Endothelial cell of umbilical vein (primary cell): ENCODE measurements at regions of chr3 and their contacts with region 1.

Region 1: DNA sequence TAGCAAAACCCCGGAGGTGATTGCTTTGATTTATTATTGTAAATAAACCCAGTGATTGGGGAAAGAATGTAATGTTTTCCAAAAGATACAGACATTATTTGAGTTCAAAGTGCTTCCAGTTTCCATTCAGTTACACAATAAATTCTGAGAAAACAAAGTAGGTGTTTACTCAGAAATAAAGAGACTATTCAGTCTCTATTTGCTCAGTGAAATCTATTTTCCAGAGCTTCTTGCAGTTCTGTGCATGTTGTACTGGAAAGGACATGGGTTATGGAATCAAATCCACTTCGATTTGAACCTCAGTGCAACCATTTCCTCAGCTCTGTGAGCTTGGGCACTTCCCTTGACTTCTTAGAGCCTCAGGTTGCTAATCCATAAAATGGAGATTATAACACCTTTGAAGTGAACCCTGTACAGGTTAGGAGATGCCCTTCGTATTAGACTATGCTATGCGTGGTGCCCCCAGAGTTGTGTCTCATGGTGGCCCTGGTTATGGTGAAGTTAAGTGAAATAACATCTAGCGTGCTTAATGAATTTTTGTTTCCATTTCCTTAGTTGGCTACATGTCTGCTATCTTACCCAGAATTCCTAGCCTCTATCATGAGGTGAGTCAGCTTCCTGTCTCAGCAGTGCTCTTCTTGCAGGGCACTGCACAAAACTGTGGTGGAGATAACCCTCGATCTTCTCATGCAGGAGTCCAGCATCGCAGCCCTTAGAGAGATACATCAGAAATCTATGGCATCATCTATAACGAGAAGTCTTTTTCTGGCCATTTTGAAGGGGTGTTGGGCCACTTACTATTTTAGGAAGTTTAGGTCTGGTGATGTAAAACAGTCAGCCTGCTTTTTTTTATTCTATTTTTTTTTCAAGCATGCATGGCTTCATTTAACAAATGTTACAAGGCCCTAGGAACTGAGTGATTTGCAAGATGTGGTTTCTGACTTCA is 97.7 kb downstream of the RPL39L start:
- DNase-seq: peak; percentile 84
- H3K4me3 ChIP-seq: no peak overlapping the region
- H3K27ac ChIP-seq: peak overlapping the region; percentile 64
- H3K4me1 ChIP-seq: peaks cover 41% of the 10 kb centered on the region
- H3K27me3 ChIP-seq: no peaks in the 10 kb centered on the region
- CTCF ChIP-seq: no peak
- POLR2A ChIP-seq: no peak

Region 2: GRCh38 chr3:185950718-185951117 is 1090.9 kb before region 1 on chr3:
- CTCF ChIA-PET with region 1: no interaction called
- POLR2A ChIA-PET with region 1: no interaction called
- dilution Hi-C with region 1: no loop called
- intact Hi-C with region 1: no loop called
- DNase-seq: no peak
- H3K4me3 ChIP-seq: no peak overlapping the region
- H3K27ac ChIP-seq: no peak overlapping the region
- H3K4me1 ChIP-seq: no peaks in the 10 kb centered on the region
- H3K27me3 ChIP-seq: peaks cover 5 to 23% of the 10 kb centered on the region in 2 experiments
- CTCF ChIP-seq: no peak
- POLR2A ChIP-seq: no peak

Region 3: GRCh38 chr3:186625600-186626042 is 416.0 kb before region 1 on chr3:
- CTCF ChIA-PET with region 1: no interaction called
- POLR2A ChIA-PET with region 1: no interaction called
- dilution Hi-C with region 1: no loop called
- intact Hi-C with region 1: no loop called
- DNase-seq: no peak
- H3K4me3 ChIP-seq: no peak overlapping the region
- H3K27ac ChIP-seq: no peak overlapping the region
- H3K4me1 ChIP-seq: no peaks in the 10 kb centered on the region
- H3K27me3 ChIP-seq: peaks cover 0 to 4% of the 10 kb centered on the region in 2 experiments
- CTCF ChIP-seq: no peak
- POLR2A ChIP-seq: no peak

Region 4: DNA sequence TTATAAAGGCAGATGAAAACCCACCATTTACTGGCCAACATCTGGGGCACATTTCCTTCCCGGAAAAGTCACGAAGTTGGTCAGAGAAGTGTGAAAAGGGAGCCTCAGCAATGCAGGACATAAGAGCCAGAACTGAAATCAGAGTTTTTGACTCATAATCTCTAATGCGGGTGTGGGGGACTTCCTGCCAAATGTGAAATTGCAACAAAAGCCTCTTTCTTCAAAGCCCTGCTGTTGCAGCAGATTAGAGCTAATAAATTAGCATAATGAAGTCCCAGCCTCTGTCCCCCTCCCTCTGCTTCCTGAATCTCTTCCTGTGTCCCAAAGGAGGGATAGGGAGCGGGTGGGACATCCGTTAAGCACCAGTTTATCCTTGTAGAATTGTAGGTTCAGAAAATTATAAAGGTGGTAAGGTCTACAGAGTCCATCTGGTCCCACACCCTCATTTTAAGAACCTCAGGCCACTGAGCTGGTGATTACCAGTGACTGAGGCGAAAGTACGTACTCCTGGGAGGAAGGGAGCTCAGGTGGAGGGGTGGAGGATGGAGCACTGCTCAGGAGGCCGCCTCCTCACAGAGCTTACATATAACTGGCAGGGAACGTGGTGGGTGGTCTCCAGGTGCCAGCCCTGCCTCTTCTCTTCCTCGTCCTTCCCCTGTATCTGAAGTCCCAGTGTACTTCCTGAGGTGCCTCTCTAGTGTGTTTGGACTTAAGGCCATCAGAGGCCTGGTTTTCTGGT is 76.3 kb before region 1 on chr3:
- CTCF ChIA-PET with region 1: no interaction called
- POLR2A ChIA-PET with region 1: no interaction called
- dilution Hi-C with region 1: no loop called
- intact Hi-C with region 1: no loop called
- DNase-seq: peak; percentile 46
- H3K4me3 ChIP-seq: no peak overlapping the region
- H3K27ac ChIP-seq: no peak overlapping the region
- H3K4me1 ChIP-seq: peaks cover 22% of the 10 kb centered on the region
- H3K27me3 ChIP-seq: no peaks in the 10 kb centered on the region
- CTCF ChIP-seq: no peak
- POLR2A ChIP-seq: no peak

Region 5: GRCh38 chr3:187016639-187017345 is 24.8 kb before region 1 on chr3:
- CTCF ChIA-PET with region 1: no interaction called
- POLR2A ChIA-PET with region 1: no interaction called
- dilution Hi-C with region 1: no loop called
- intact Hi-C with region 1: loop called (anchors 1 kb)
- DNase-seq: peak; percentile 92
- H3K4me3 ChIP-seq: no peak overlapping the region
- H3K27ac ChIP-seq: peak overlapping the region; percentile 43
- H3K4me1 ChIP-seq: peaks cover 59% of the 10 kb centered on the region
- H3K27me3 ChIP-seq: no peaks in the 10 kb centered on the region
- CTCF ChIP-seq: no peak
- POLR2A ChIP-seq: peak; percentile 27

Region 6: DNA sequence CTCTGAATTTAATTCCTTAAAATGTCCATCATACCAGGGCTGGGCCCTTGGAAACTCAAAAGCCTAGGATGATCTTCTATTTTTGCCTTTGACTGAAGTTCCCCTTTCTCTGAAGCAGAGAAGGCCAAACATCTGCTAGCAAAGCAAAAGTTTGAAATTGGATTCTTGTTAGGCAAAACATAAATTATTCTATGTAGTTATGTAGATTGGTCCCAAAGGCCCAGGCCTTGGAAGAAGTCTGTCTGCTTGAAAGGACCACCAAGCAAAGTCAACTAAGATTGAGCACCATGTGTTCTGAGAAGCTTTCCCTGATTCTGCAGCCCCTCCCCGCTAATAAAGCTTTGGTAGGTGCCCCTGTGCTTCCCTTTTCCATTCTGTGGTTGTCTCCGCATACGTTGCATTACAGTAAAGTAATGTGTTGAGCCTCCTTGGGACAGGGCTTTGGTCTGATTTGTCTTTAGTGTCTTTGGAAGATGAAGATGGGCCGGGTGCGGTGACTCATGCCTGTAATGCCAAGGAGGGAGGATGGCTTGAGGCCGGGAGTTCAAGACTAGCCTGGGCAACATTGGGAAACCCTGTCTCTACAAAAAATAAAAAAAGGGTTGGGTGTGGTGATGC is 41.2 kb after region 1 on chr3:
- CTCF ChIA-PET with region 1: interaction called, 3 read pairs
- POLR2A ChIA-PET with region 1: no interaction called
- dilution Hi-C with region 1: no loop called
- intact Hi-C with region 1: loop called (anchors 2 kb)
- DNase-seq: no peak
- H3K4me3 ChIP-seq: no peak overlapping the region
- H3K27ac ChIP-seq: no peak overlapping the region
- H3K4me1 ChIP-seq: peaks cover 14% of the 10 kb centered on the region
- H3K27me3 ChIP-seq: no peaks in the 10 kb centered on the region
- CTCF ChIP-seq: no peak
- POLR2A ChIP-seq: no peak